ENCODE measurements at regions of chr9 and their contacts with region 1.

Region 1: DNA sequence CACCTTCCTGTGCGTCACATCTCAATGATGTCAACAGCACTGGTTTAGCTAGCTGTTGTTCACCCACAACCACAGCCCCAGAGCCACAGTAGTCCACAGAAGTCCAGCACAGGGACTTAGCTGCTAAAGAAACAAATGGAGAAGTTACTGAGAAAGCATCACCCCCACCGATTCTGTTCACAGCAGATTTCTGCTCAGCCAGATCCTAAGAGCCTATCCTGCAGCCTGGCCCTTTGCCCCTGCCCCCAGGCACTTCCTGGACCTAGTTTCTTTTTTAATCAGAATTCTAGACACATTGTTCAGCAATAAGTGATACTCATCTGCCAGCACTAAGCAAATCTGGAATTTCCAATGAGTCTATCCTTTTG is 7.4 kb downstream of the B4GALT1 start:
- DNase-seq: peak; percentile 58
- H3K4me3 ChIP-seq: no peak overlapping the region
- H3K27ac ChIP-seq: peak overlapping the region; percentile 93 to 97 (median 96)
- H3K4me1 ChIP-seq: peaks cover 61 to 97% (median 82%) of the 10 kb centered on the region in 4 donors
- H3K27me3 ChIP-seq: no peaks in the 10 kb centered on the region
- CTCF ChIP-seq: no peak
- EP300 ChIP-seq: no peak
- POLR2A ChIP-seq: peak; percentile 34

Region 2: GRCh38 chr9:33202552-33203201 is 42.9 kb after region 1 on chr9:
- in situ Hi-C with region 1: no loop called
- intact Hi-C with region 1: loop called (anchors 10 kb)
- DNase-seq: peak; percentile 77
- H3K4me3 ChIP-seq: no peak overlapping the region
- H3K27ac ChIP-seq: peak overlapping the region; percentile 3 to 51 (median 28)
- H3K4me1 ChIP-seq: peaks cover 4 to 9% (median 6%) of the 10 kb centered on the region in 4 donors
- H3K27me3 ChIP-seq: no peaks in the 10 kb centered on the region
- CTCF ChIP-seq: no peak
- EP300 ChIP-seq: no peak
- POLR2A ChIP-seq: no peak

Measured in transverse colon (tissue), 4 donors.